Activated T-helper 2 cell treated with anti-CD3 and anti-CD28 coated beads, Interferon-gamma antibody, Interleukin-2, Interleukin-4, amounts not matched to agents 10 μg/mL and 5 μg/mL and 100 μg/mL, durations not matched to agents 14 hours and 24 hours and 36 hours (primary cell): ENCODE measurements at regions of chr3 and their contacts with region 1.

Region 1: GRCh38 chr3:136861890-136862616 is at the start of gene NCK1:
- DNase-seq: peak; percentile 98
- H3K4me3 Mint-ChIP-seq: peak within 1 kb of the TSS; percentile 95
- H3K27ac Mint-ChIP-seq: peak within 1 kb of the TSS; percentile 98
- H3K4me1 Mint-ChIP-seq: peaks cover 41% of the 10 kb centered on the region
- H3K27me3 Mint-ChIP-seq: no peaks in the 10 kb centered on the region
- total RNA-seq, gene NCK1: 40.2 and 41.9 TPM in 2 replicates

Region 2: DNA sequence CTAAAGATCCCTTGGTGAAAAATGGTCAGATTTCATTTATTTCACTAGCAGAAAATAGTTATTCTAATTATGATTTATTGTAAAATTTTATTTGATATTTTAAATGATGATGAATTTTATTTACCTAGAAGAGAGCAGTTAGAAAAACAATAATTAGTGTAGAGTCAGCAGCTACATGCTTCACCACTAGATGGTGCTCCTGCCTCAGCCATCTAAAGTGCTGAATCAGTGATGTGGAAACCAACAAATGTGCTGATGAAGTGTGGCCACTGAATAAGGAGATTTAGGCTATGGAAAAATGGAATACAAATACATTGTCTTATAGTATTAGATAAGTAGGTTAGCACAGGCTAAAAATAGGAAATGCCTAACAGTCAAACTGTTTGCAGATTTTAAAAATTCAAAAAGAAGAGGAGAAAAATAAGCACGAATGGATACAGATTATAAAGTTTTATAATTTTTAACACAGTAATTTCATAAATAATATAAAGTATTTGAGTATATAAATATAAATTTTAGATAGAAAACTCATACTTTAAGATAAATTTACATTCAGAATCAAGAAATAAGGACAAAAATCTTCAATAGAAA is 786.7 kb before region 1 on chr3:
- intact Hi-C with region 1: loop called (anchors 5 kb)
- DNase-seq: peak; percentile 53
- H3K4me3 Mint-ChIP-seq: no peak overlapping the region
- H3K27ac Mint-ChIP-seq: no peak overlapping the region
- H3K4me1 Mint-ChIP-seq: peaks cover 5% of the 10 kb centered on the region
- H3K27me3 Mint-ChIP-seq: peaks cover 7% of the 10 kb centered on the region

Region 3: GRCh38 chr3:136838641-136839555 is 23.2 kb before region 1 on chr3:
- intact Hi-C with region 1: loop called (anchors 1 kb)
- DNase-seq: no peak
- H3K4me3 Mint-ChIP-seq: peak overlapping the region; percentile 10
- H3K27ac Mint-ChIP-seq: peak overlapping the region; percentile 58
- H3K4me1 Mint-ChIP-seq: peaks cover 41% of the 10 kb centered on the region
- H3K27me3 Mint-ChIP-seq: no peaks in the 10 kb centered on the region

Region 4: GRCh38 chr3:136919799-136920580 is 57.9 kb after region 1 on chr3:
- intact Hi-C with region 1: loop called (anchors 2 kb)
- DNase-seq: no peak
- H3K4me3 Mint-ChIP-seq: no peak overlapping the region
- H3K27ac Mint-ChIP-seq: peak overlapping the region; percentile 64
- H3K4me1 Mint-ChIP-seq: peaks cover 64% of the 10 kb centered on the region
- H3K27me3 Mint-ChIP-seq: no peaks in the 10 kb centered on the region

Region 5: GRCh38 chr3:137013955-137014688 is 152.1 kb after region 1 on chr3:
- intact Hi-C with region 1: loop called (anchors 5 kb)
- DNase-seq: peak; percentile 74
- H3K4me3 Mint-ChIP-seq: peak overlapping the region; percentile 77
- H3K27ac Mint-ChIP-seq: no peak overlapping the region
- H3K4me1 Mint-ChIP-seq: peaks cover 5% of the 10 kb centered on the region
- H3K27me3 Mint-ChIP-seq: peaks cover 3% of the 10 kb centered on the region